Colonic mucosa (tissue), 4 donors: ENCODE measurements at regions of chr17 and their contacts with region 1.

Region 1: DNA sequence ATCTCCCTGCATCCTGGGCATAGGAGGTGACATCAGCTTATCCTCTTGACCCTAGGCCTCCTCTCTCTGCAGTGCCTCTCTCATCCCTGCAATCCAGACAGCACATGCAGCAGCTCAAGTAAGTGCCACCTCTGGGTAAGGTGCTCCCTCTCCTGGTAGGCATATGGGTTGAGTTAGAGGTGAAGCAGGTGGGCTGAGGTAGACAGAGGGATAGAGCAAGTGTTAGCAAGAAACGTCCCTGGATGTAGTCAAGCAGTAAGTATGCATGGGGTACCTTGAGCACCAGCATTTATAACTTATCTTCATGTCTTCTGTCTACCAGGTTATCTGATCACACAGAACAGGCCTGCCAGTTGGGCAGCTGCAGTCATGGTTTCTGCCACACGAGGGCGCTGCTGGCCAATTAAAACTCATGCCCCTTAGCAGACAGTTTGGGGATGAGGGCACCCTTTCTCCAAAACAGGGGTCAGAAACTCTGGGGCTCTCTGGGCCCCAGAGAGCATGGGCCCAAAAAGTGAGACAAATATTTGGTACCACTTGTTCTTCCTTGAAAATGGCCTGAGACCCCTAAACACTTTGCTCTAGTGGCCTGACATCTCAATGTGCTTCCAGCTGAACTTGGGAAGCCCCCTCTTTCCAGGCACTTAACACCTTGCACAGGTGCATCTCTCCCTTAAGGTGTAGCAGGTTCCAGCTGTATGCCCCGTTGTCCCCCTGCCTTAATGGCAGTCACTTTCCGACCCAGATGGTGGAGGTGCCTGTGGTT is 59.8 kb downstream of the NEUROD2 start:
- DNase-seq: peak; percentile 78
- H3K4me3 ChIP-seq: no peak overlapping the region
- H3K27ac ChIP-seq: no peak overlapping the region
- H3K4me1 ChIP-seq: no peaks in the 10 kb centered on the region
- H3K27me3 ChIP-seq: no peaks in the 10 kb centered on the region
- CTCF ChIP-seq: peak; percentile 93

Region 2: DNA sequence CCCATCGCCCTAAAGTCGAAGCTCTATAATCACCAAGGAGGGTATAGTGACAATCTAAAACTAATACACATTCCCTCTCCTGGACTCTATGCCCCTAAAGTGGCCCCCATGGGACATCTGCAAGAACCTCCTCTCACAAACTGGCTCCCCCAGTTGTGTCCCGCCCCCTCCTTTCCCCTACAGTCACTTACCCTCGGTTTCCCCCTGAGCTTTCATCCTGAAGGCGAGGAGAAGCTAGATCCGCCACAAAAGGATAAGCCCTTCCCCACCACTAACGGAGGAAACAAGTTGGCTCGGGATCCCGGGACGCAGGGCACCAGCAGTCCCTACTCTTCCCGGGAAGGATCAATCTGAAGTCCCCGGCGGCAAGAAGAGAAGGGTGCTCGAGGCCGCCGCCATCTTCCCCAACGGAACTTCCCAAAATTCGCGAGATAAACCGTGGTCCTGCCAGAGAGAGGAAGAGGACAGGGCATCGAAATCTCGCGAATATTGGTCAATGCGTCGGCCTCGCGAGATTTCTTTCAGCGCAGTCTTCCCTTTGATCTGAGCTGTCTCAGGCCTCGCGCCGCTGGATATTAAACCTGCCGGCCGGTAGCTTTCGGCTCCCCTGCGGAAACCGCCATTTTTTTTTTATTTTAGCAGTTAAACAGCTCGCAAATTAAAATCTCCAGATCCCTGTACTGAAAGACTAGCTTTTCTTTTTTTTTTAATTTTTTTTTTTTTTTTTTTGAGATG is 96.9 kb before region 1 on chr17 and contains the start of gene MED1:
- intact Hi-C with region 1: no loop called
- DNase-seq: peak; percentile 95
- H3K4me3 ChIP-seq: peak within 1 kb of the TSS; percentile 92
- H3K27ac ChIP-seq: peak within 1 kb of the TSS; percentile 68
- H3K4me1 ChIP-seq: no peaks in the 10 kb centered on the region
- H3K27me3 ChIP-seq: no peaks in the 10 kb centered on the region
- CTCF ChIP-seq: no peak
- total RNA-seq, gene MED1: 29.1 to 31.2 TPM

Region 3: DNA sequence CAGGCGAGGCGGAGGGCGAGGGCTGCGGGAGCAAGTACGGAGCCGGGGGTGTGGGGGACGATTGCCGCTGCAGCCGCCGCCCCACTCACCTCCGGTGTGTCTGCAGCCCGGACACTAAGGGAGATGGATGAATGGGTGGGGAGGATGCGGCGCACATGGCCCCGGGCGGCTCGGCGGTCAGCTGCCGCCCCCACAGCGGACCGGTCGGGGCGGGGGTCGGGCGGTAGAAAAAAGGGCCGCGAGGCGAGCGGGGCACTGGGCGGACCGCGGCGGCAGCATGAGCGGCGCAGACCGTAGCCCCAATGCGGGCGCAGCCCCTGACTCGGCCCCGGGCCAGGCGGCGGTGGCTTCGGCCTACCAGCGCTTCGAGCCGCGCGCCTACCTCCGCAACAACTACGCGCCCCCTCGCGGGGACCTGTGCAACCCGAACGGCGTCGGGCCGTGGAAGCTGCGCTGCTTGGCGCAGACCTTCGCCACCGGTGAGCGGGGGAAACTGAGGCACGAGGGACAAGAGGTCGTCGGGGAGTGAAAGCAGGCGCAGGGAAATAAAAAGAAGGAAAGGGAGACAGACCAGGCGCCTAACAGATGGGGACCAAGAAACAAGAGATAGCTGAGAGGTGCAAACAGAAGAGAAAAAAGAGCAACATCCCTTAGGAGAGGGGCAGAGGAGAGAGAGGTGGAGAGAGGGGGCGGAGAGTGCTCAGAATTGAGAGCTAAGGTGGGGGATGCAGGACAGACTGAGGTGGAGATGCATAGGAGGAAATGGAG is 120.5 kb after region 1 on chr17 and contains the start of gene PNMT:
- intact Hi-C with region 1: loop called (anchors 5 kb)
- DNase-seq: peak; percentile 78
- H3K4me3 ChIP-seq: peak within 1 kb of the TSS; percentile 29
- H3K27ac ChIP-seq: no peak within 1 kb of the TSS
- H3K4me1 ChIP-seq: peaks cover 16% of the 10 kb centered on the region
- H3K27me3 ChIP-seq: peaks cover 20% of the 10 kb centered on the region
- CTCF ChIP-seq: peak; percentile 49
- total RNA-seq, gene PNMT: 0.47 TPM in 1 of 2 donors, not detected in the other

Region 4: DNA sequence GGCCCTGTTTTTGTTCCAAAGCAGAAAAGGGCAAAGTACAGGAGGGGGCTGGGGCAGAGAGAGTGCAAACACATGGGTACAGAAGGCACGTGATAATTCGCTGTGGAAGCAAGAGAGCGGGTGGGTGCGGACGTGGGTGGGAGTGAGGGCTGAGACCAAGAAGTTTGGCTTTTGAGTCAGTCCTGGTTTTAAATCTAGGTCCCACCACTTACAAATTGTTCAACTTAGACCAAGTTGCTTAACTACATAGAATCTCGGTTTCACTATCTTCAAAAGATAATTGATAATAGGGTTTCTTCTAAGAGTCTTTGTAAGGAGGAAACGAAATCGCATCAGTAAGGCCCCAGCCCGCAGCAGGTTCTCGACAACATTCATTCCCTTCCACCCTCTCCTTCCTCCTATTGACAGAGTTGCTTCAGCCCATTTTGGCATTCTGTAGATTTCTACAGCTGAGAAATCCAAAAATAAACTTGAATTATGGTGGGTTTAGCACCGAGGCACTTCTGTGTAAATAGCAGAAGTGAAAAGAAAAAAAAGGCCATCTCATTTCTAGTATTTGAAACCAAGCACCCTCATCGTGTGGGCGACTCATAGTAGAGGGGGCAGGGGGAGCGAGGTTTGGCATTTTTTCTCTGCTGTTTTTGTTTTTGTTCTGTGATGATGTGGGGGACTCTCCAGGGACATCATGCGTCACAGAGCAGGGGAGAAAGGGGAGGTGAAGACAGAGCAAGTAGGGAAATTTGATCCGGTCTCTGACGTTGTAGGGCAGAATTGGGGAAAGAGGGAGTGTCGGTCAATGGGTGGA is 1051.0 kb after region 1 on chr17:
- intact Hi-C with region 1: no loop called
- DNase-seq: no peak
- H3K4me3 ChIP-seq: no peak overlapping the region
- H3K27ac ChIP-seq: peak overlapping the region; percentile 65
- H3K4me1 ChIP-seq: no peaks in the 10 kb centered on the region
- H3K27me3 ChIP-seq: no peaks in the 10 kb centered on the region
- CTCF ChIP-seq: no peak